Heart left ventricle (tissue), 16 donors: ENCODE measurements at regions of chr1 and their contacts with region 1.

Region 1: DNA sequence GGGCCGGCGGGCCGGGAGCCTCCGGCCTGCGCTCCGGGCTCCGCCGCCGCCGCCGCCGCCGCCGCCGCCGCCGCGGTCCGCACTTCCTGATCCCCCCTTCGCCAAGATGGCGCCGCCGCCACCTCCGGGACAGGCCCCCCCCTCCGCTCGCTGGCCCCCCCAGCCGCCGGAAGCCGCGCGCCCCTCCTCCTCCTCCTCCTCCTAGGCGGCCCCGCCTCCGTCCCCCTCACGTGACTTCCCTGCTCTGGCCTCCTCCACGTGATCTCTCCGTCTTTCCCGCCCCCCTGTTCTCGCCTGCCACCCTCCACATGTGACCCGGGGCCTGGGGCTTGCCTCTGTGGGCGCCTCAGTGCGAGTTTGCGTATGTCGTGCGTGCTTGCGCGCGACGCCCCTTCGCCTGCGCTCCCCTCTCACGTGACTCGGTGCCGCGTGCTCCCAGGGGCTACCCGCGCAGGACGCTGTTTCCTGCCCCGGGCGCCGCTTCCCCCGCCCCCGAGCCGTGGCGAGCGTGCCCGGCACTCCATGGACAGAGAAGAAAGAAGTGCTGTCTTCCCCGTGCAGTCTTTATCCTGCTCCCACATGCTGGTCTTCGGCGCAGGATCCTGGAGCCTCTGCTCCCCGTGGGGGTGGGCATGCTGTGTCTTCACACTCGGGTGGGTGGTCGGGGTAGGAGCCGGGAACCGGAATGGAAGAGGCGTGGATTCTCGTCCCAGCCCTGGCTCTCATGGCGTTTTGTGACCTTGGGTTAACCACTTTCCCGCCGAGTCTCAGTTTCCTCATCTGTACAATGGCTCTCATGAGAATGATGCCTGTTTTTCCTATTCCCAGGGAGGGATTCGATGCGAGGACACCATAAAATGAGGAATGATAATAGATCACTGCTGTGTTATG is at the start of gene UBE2Q1:
- DNase-seq: peak; percentile 99 to 100 (median 99)
- ATAC-seq: peak; percentile 97 to 98 (median 98)
- H3K4me3 ChIP-seq: peak within 1 kb of the TSS; percentile 67 to 98 (median 95)
- H3K27ac ChIP-seq: peak within 1 kb of the TSS; percentile 85 to 97 (median 94)
- H3K4me1 ChIP-seq: peaks cover 3 to 36% (median 22%) of the 10 kb centered on the region in 12 donors
- H3K27me3 ChIP-seq: no peaks in the 10 kb centered on the region
- CTCF ChIP-seq: no peak
- POLR2A ChIP-seq: peak in 1 of 2 donors; percentile 63
- total RNA-seq, gene UBE2Q1: 22.1 to 79.4 (median 58.8) TPM

Region 2: GRCh38 chr1:154220071-154220969 is 338.5 kb before region 1 on chr1 and contains the start of gene UBAP2L:
- intact Hi-C with region 1: loop called in 1 of 10 experiments (anchors 10 kb)
- DNase-seq: peak; percentile 99 to 100 (median 99)
- ATAC-seq: peak; percentile 97 to 99 (median 98)
- H3K4me3 ChIP-seq: peak within 1 kb of the TSS; percentile 65 to 97 (median 82)
- H3K27ac ChIP-seq: peak within 1 kb of the TSS; percentile 95 to 100 (median 98)
- H3K4me1 ChIP-seq: peaks cover 7 to 61% (median 51%) of the 10 kb centered on the region in 12 donors
- H3K27me3 ChIP-seq: no peaks in the 10 kb centered on the region
- CTCF ChIP-seq: peak in 1 of 12 donors; percentile 3
- POLR2A ChIP-seq: peak; percentile 19 to 61
- total RNA-seq, gene UBAP2L: 57.4 to 142 (median 100) TPM

Region 3: DNA sequence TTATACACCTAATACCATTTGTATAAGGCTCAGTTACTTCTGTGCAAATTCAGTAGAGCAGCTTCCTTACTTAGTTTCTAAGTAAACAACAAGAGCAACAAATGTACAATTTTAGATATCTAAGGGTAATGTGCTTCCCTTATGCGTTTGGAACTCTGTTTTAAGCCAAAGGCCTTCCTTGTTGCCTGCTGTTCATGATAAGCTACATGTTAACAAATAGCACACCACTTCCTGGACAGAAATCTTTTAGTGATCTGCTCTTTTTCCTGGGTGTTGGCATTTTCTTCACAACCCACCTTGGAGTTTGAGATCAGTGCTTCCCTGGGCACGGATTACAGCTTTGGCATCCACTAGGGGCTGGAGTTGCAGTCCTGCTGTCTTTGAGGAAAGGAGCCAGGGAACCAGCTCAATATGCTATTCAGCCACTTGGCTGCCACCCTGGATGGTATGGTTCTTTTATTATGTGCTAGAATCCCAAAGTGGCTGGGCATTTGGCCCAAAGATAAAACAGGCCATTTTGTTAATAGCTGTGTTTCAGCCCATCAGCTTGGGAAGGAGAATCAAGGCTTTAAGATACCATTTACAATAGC is 104.7 kb after region 1 on chr1:
- intact Hi-C with region 1: loop called in 6 of 10 experiments (anchors 2 to 10 kb)
- DNase-seq: no peak
- ATAC-seq: peak in 1 of 4 donors; percentile 36
- H3K4me3 ChIP-seq: no peak overlapping the region
- H3K27ac ChIP-seq: no peak overlapping the region
- H3K4me1 ChIP-seq: peaks cover 0 to 6% (median 0%) of the 10 kb centered on the region in 12 donors
- H3K27me3 ChIP-seq: peaks cover 0 to 11% (median 0%) of the 10 kb centered on the region in 9 donors
- CTCF ChIP-seq: no peak
- POLR2A ChIP-seq: no peak

Region 4: GRCh38 chr1:154760469-154760933 is 201.7 kb after region 1 on chr1:
- intact Hi-C with region 1: loop called in 5 of 10 experiments (anchors 5 to 10 kb)
- DNase-seq: peak; percentile 43 to 88 (median 58)
- ATAC-seq: peak in 3 of 4 donors; percentile 82 to 92 (median 91)
- H3K4me3 ChIP-seq: peak overlapping the region; percentile 13 to 58 (median 44)
- H3K27ac ChIP-seq: peak overlapping the region in 1 of 12 donors; percentile 57
- H3K4me1 ChIP-seq: peaks cover 0 to 29% (median 17%) of the 10 kb centered on the region in 12 donors
- H3K27me3 ChIP-seq: peaks cover 0 to 33% (median 0%) of the 10 kb centered on the region in 9 donors
- CTCF ChIP-seq: peak; percentile 66 to 83 (median 74)
- POLR2A ChIP-seq: no peak

Region 5: GRCh38 chr1:154878371-154879022 is 319.7 kb after region 1 on chr1:
- intact Hi-C with region 1: loop called (anchors 1 to 5 kb)
- DNase-seq: peak; percentile 77 to 88 (median 80)
- ATAC-seq: peak; percentile 84 to 96 (median 94)
- H3K4me3 ChIP-seq: no peak overlapping the region
- H3K27ac ChIP-seq: no peak overlapping the region
- H3K4me1 ChIP-seq: peaks cover 0 to 4% (median 0%) of the 10 kb centered on the region in 12 donors
- H3K27me3 ChIP-seq: no peaks in the 10 kb centered on the region
- CTCF ChIP-seq: peak; percentile 70 to 92 (median 86)
- POLR2A ChIP-seq: no peak

Region 6: DNA sequence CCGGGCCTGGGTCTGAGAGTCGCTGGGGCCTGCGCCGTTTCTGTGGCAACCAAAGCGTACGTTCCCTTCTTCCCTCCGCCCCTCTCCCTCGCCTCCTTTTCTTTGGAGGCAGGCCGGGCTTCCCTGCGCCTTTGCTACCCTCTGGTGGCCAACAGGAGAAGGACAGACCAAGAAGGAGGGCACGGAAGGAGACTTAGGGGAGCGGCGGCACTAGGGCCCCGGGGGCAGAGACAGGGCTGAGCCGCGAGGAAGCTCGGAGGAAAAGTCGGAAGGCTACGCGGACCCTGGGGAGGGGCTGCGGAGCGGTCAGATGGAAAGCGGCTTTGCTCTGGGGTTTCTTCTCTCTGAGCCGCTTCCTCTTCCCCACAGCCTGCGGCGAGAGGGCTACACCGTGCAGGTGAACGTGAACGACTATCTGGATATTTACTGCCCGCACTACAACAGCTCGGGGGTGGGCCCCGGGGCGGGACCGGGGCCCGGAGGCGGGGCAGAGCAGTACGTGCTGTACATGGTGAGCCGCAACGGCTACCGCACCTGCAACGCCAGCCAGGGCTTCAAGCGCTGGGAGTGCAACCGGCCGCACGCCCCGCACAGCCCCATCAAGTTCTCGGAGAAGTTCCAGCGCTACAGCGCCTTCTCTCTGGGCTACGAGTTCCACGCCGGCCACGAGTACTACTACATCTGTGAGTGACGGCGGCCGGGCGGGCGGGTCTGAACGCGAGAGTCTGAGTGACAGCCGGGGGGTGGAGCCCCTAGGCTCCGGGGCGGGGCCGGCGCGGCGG is 526.1 kb after region 1 on chr1:
- intact Hi-C with region 1: loop called in 1 of 10 experiments (anchors 10 kb)
- DNase-seq: peak; percentile 92 to 96 (median 93)
- ATAC-seq: peak; percentile 83 to 91 (median 88)
- H3K4me3 ChIP-seq: peak overlapping the region; percentile 52 to 87 (median 73)
- H3K27ac ChIP-seq: peak overlapping the region; percentile 65 to 97 (median 88)
- H3K4me1 ChIP-seq: peaks cover 9 to 63% (median 44%) of the 10 kb centered on the region in 12 donors
- H3K27me3 ChIP-seq: peaks cover 38 to 46% (median 45%) of the 10 kb centered on the region in 9 donors
- CTCF ChIP-seq: peak; percentile 89 to 98 (median 93)
- POLR2A ChIP-seq: no peak